CD8-positive, alpha-beta T cell (primary cell): ENCODE measurements at regions of chr3 and their contacts with region 1.

Region 1: GRCh38 chr3:196609343-196609775 is 30.1 kb upstream of the NRROS start:
- DNase-seq: peak; percentile 85 to 99 (median 93)
- ATAC-seq: peak; percentile 81
- H3K4me3 ChIP-seq: no peak overlapping the region
- H3K4me3 Mint-ChIP-seq: peak overlapping the region; percentile 62
- H3K27ac ChIP-seq: peak overlapping the region in 1 of 2 experiments; percentile 14
- H3K27ac Mint-ChIP-seq: peak overlapping the region; percentile 81
- H3K4me1 ChIP-seq: peaks cover 27% of the 10 kb centered on the region
- H3K4me1 Mint-ChIP-seq: peaks cover 40% of the 10 kb centered on the region
- H3K27me3 ChIP-seq: no peaks in the 10 kb centered on the region
- H3K27me3 Mint-ChIP-seq: no peaks in the 10 kb centered on the region
- CTCF ChIP-seq: peak; percentile 93

Region 2: DNA sequence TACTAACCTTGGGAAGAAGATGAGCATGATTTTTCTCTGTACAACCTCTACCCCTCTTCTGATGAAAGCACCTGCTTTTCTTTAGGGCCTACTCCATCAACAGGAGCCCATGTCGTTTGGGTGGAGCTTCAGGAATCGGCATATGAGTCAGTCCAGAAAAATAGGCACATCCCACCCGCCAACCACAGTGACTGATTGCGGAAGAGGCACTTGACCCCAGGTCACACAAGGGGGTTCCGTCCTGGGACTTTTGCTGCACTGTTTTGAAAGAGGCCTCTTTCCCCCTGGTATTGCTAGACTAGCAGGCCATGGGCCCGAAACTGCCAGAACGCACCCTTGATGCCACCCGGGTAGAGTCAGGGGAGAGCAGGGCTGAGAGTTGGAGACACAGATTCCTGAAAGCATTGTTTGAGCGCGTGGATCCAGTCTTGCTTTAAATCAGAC is 10.8 kb after region 1 on chr3:
- CTCF ChIA-PET with region 1: interaction called, 23 read pairs
- POLR2A ChIA-PET with region 1: no interaction called
- intact Hi-C with region 1: no loop called
- DNase-seq: peak in 2 of 9 experiments; percentile 46 to 60
- ATAC-seq: peak; percentile 64
- H3K4me3 ChIP-seq: no peak overlapping the region
- H3K4me3 Mint-ChIP-seq: no peak overlapping the region
- H3K27ac ChIP-seq: no peak overlapping the region
- H3K27ac Mint-ChIP-seq: peak overlapping the region; percentile 1
- H3K4me1 ChIP-seq: peaks cover 7% of the 10 kb centered on the region
- H3K4me1 Mint-ChIP-seq: peaks cover 24% of the 10 kb centered on the region
- H3K27me3 ChIP-seq: no peaks in the 10 kb centered on the region
- H3K27me3 Mint-ChIP-seq: no peaks in the 10 kb centered on the region
- CTCF ChIP-seq: no peak

Region 3: GRCh38 chr3:196639483-196640296 is 30.3 kb after region 1 on chr3 and contains the start of gene NRROS:
- CTCF ChIA-PET with region 1: interaction called, 91 read pairs
- POLR2A ChIA-PET with region 1: interaction called, 5 read pairs
- intact Hi-C with region 1: no loop called
- DNase-seq: peak; percentile 18 to 79 (median 58)
- ATAC-seq: peak; percentile 41
- H3K4me3 ChIP-seq: peak within 1 kb of the TSS; percentile 62 to 88
- H3K4me3 Mint-ChIP-seq: peak within 1 kb of the TSS; percentile 70
- H3K27ac ChIP-seq: peak within 1 kb of the TSS; percentile 47 to 84
- H3K27ac Mint-ChIP-seq: peak within 1 kb of the TSS; percentile 84
- H3K4me1 ChIP-seq: peaks cover 48% of the 10 kb centered on the region
- H3K4me1 Mint-ChIP-seq: peaks cover 64% of the 10 kb centered on the region
- H3K27me3 ChIP-seq: no peaks in the 10 kb centered on the region
- H3K27me3 Mint-ChIP-seq: no peaks in the 10 kb centered on the region
- CTCF ChIP-seq: no peak
- total RNA-seq, gene NRROS: 4.6 to 5.7 TPM

Region 4: DNA sequence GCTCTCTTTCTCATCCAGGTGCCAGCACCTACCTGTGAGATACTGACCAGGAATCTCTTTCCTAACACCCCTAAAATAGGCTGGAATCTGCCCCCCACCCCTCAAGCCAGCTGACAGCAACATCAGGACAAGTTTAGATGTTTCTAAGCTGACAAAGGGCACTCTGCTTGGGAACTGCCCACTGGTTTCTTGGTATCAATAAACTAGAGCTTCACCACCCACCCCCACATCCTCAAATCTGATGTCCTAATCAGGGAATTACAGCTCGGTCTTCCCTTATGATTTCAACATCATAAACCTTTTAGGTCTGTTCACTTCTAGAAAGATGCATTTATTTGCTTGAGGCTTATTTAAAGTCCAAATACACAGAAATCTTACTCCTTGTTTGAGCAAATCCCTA is 68.0 kb after region 1 on chr3:
- CTCF ChIA-PET with region 1: interaction called, 26 read pairs
- POLR2A ChIA-PET with region 1: no interaction called
- intact Hi-C with region 1: no loop called
- DNase-seq: no peak
- ATAC-seq: no peak
- H3K4me3 ChIP-seq: no peak overlapping the region
- H3K4me3 Mint-ChIP-seq: no peak overlapping the region
- H3K27ac ChIP-seq: no peak overlapping the region
- H3K27ac Mint-ChIP-seq: no peak overlapping the region
- H3K4me1 ChIP-seq: no peaks in the 10 kb centered on the region
- H3K4me1 Mint-ChIP-seq: peaks cover 7% of the 10 kb centered on the region
- H3K27me3 ChIP-seq: no peaks in the 10 kb centered on the region
- H3K27me3 Mint-ChIP-seq: no peaks in the 10 kb centered on the region
- CTCF ChIP-seq: no peak

Region 5: DNA sequence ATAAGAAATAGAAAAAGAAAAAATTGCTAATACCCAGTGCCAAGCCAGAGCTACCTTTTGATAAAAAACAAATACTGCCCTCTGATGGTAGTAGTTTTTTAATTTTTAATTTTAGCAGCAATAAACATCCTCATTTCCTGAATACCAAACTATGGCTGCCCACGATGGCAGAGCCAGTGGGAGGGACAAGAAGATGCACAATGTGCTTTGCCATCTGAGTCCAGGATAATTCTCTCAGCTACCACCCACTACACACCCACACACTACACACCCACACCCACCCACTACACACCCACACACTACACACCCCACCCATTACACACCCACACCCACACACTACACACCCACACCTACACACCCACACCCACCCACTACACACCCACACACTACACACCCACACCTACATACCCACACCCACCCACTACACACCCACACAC is 84.9 kb after region 1 on chr3:
- CTCF ChIA-PET with region 1: interaction called, 235 read pairs
- POLR2A ChIA-PET with region 1: interaction called, 3 read pairs
- intact Hi-C with region 1: no loop called
- DNase-seq: peak in 5 of 9 experiments; percentile 15 to 75 (median 31)
- ATAC-seq: peak; percentile 69
- H3K4me3 ChIP-seq: no peak overlapping the region
- H3K4me3 Mint-ChIP-seq: no peak overlapping the region
- H3K27ac ChIP-seq: no peak overlapping the region
- H3K27ac Mint-ChIP-seq: no peak overlapping the region
- H3K4me1 ChIP-seq: peaks cover 10% of the 10 kb centered on the region
- H3K4me1 Mint-ChIP-seq: peaks cover 3% of the 10 kb centered on the region
- H3K27me3 ChIP-seq: no peaks in the 10 kb centered on the region
- H3K27me3 Mint-ChIP-seq: no peaks in the 10 kb centered on the region
- CTCF ChIP-seq: no peak

Region 6: DNA sequence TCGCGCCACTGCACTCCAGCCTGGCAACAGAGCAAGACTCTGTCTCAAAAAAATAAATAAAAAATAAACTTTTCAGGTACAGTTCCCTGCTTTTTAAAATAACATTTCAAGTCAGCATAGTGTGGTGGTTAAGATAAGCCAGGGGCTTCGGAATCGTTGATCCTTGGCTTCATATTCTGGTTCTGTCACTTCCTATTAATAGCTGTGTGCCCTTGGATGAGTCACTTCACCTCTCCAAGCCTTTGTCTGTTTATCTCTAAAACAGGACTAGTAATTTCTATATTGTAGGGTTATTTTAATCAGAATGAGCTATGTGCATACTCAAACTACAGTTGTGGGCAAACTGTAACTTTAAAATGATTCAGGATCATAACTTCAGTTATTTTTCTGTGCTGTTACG is 204.5 kb after region 1 on chr3:
- CTCF ChIA-PET with region 1: no interaction called
- POLR2A ChIA-PET with region 1: no interaction called
- intact Hi-C with region 1: loop called in 1 of 2 experiments (anchors 10 kb)
- DNase-seq: no peak
- ATAC-seq: no peak
- H3K4me3 ChIP-seq: no peak overlapping the region
- H3K4me3 Mint-ChIP-seq: no peak overlapping the region
- H3K27ac ChIP-seq: no peak overlapping the region
- H3K27ac Mint-ChIP-seq: no peak overlapping the region
- H3K4me1 ChIP-seq: no peaks in the 10 kb centered on the region
- H3K4me1 Mint-ChIP-seq: no peaks in the 10 kb centered on the region
- H3K27me3 ChIP-seq: no peaks in the 10 kb centered on the region
- H3K27me3 Mint-ChIP-seq: no peaks in the 10 kb centered on the region
- CTCF ChIP-seq: no peak

Region 7: DNA sequence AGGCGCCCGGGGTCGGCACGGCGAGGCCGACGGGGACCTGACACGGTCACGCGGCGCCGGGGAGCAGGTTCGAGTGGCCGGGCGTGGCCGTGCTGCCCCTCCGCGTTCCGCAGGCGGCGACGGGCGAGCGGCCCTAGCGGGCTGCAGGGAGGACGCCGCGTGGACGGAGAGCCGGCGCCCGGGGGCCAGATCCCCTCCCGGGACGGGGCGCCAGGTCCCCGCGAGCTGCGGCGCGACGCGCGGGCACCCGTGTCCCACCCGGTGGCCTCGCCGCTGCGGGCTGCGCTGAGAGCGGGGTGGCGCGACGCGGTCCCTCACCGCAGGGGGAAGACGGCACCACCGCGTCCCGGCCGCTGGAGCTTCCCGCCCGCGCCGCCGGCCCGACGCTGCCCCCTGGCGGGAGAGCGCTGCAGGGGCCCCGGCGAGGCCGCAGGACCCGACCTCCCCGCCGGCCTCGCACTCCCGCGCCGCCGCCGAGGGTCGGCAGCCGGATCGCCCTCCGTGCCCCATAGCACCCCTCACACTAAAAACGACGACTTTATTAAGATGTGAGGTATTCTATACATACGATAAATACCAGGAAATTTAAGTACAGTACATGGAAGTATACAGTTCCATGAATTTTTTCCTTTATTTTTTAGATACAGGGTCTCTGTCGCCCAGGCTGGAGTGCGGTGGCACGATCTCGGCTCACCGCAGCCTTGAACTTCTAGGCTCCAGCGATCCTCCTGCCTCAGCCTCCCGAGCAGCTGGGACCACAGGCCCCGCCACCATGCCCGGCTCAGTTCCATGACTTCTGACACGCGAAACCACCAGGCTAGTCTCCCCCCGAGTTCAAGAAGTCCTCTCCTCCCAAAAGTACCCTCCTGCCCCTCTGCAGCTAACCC is 360.5 kb after region 1 on chr3:
- CTCF ChIA-PET with region 1: interaction called, 4 read pairs
- POLR2A ChIA-PET with region 1: no interaction called
- intact Hi-C with region 1: loop called (anchors 2 to 5 kb)
- DNase-seq: peak; percentile 29 to 82 (median 61)
- ATAC-seq: peak; percentile 72
- H3K4me3 ChIP-seq: peak overlapping the region in 1 of 2 experiments; percentile 65
- H3K4me3 Mint-ChIP-seq: peak overlapping the region; percentile 77
- H3K27ac ChIP-seq: no peak overlapping the region
- H3K27ac Mint-ChIP-seq: no peak overlapping the region
- H3K4me1 ChIP-seq: peaks cover 13% of the 10 kb centered on the region
- H3K4me1 Mint-ChIP-seq: peaks cover 4% of the 10 kb centered on the region
- H3K27me3 ChIP-seq: no peaks in the 10 kb centered on the region
- H3K27me3 Mint-ChIP-seq: peaks cover 11% of the 10 kb centered on the region
- CTCF ChIP-seq: peak; percentile 63